ENCODE measurements at regions of chr2 and their contacts with region 1.

Region 1: DNA sequence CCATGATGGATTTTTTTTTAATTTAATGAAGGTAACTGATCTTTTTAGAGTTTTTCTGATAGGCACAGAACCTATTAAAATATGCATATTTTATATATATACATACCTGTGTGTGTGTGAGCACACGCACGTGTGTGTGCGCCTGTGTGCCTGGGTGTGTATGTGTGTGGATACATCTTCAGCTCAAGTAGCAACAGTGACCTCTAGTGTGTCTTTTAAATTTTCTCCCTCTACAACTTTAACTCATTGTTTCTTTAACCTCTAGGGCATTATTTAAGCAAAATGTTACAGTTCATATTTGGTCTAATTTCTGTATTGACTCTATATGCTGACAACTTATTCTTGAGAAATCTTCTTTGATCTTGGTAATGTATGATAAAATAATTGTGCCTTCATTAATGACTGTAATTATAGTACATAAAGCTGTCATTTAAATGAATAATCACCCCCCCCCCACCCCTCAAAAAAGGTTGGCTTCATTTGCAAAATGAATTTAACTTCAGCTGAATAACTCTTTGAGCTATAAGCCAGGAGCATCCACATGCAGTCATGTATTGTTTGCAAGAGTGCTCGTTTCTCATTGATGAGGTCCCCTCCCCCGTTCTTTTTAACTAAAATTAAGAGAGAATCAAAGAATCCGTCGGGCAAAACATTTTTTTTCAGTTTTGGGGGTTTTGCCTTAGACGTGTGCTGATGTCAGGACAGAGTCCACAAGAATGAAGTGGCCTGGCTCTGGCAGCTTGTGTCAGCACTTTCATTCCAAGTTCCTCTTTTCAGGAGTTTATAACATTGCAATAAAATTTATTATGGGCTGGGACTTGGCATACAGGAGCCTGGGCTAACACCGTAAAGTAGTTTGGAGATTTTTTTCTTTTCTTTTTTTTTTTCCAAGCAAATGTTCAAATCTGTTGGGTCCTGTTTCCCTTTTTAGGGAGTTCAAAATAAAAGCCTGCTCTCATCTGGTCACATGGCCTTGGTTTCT is 80.0 kb downstream of the ETAA1 start:
- DNase-seq: peak; percentile 40
- H3K27ac ChIP-seq: no peak overlapping the region
- CTCF ChIP-seq: peak; percentile 75

Region 2: DNA sequence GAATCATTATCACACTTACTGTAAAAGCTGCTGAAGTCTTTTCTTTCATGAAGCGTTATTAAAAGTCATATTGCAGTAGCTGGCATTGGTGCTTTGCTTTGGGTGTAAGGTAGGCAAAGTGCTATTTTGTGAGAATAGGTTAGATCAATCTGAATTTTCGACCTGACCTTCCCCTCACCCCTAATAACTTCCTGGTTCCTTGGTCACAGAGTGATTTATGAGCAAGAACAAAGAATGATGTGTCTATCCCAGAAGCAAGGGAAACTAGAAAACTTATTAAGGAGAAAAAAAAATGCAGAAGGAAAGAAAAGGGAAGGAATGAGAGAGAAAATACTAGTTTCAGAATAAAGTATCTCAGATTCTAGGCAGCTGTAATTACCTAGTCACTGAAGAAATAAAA is 1205.3 kb before region 1 on chr2:
- CTCF ChIA-PET with region 1: interaction called, 11 read pairs
- POLR2A ChIA-PET with region 1: no interaction called
- DNase-seq: no peak
- H3K27ac ChIP-seq: no peak overlapping the region
- CTCF ChIP-seq: no peak

Region 3: GRCh38 chr2:67399831-67400489 is 77.1 kb before region 1 on chr2:
- CTCF ChIA-PET with region 1: no interaction called
- POLR2A ChIA-PET with region 1: no interaction called
- DNase-seq: no peak
- H3K27ac ChIP-seq: no peak overlapping the region
- CTCF ChIP-seq: no peak